Activated CD4-positive, alpha-beta T cell treated with anti-CD3 and anti-CD28 coated beads for 36 hours (primary cell): ENCODE measurements at regions of chr3 and their contacts with region 1.

Region 1: DNA sequence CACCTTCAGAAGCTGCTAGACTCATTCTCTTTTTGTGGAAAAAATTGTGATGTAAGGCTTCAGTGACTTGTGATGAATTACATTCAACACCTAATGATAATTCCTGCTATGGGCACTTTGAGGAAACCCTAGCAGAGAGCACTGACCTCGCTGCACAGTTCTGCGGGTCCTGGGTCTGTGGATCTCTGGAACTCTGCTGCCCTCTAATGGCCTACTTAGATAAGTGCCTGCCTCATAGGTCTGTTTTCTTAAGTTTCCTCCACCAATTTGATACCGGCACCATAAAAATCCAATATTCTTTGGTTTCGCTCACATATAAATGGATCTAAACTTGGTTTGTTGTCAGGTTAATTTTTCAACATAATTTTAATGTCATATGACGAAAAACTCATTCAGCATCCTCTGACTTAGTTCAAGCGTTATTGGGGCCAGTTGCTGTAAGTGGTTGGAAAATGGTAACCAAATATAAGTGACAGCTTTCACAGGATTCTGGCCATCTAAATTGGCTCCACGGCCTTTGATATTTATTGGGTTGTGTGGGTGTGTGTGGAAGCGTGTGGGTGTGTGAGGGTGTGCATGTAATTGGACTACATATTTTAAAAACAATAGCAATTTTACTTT is 10.4 kb downstream of the SLITRK3 start:
- DNase-seq: peak; percentile 55
- ATAC-seq: peak; percentile 81
- H3K4me3 Mint-ChIP-seq: no peak overlapping the region
- H3K27ac Mint-ChIP-seq: no peak overlapping the region
- H3K4me1 Mint-ChIP-seq: no peaks in the 10 kb centered on the region
- H3K27me3 Mint-ChIP-seq: peaks cover 12% of the 10 kb centered on the region

Region 2: GRCh38 chr3:163924600-163924999 is 1261.2 kb before region 1 on chr3:
- CTCF ChIA-PET with region 1: no interaction called
- POLR2A ChIA-PET with region 1: no interaction called
- intact Hi-C with region 1: loop called in 1 of 2 experiments (anchors 10 kb)
- DNase-seq: no peak
- ATAC-seq: no peak
- H3K4me3 Mint-ChIP-seq: no peak overlapping the region
- H3K27ac Mint-ChIP-seq: no peak overlapping the region
- H3K4me1 Mint-ChIP-seq: no peaks in the 10 kb centered on the region
- H3K27me3 Mint-ChIP-seq: no peaks in the 10 kb centered on the region

Region 3: GRCh38 chr3:164230385-164231094 is 955.3 kb before region 1 on chr3:
- CTCF ChIA-PET with region 1: no interaction called
- POLR2A ChIA-PET with region 1: no interaction called
- intact Hi-C with region 1: no loop called
- DNase-seq: no peak
- ATAC-seq: no peak
- H3K4me3 Mint-ChIP-seq: no peak overlapping the region
- H3K27ac Mint-ChIP-seq: no peak overlapping the region
- H3K4me1 Mint-ChIP-seq: no peaks in the 10 kb centered on the region
- H3K27me3 Mint-ChIP-seq: no peaks in the 10 kb centered on the region

Region 4: DNA sequence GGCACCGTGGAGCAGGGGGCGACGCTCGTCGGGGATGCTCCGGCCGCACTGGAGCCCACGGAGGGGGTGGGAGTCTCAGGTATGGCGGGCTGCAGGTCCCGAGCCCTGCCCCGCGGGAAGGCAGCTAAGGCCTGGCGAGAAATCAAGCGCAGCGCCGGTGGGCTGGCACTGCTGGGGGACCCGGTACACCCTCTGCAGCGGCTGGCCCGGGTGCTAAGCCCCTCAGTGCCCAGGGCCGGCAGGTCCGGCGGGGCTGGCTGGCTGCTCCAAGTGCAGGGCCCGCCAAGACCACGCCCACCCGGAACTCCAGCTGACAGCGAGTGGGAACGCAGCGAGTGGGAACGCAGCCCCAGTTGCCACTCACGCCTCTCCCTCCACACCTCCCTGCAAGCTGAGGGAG is 783.9 kb before region 1 on chr3:
- CTCF ChIA-PET with region 1: no interaction called
- POLR2A ChIA-PET with region 1: no interaction called
- intact Hi-C with region 1: loop called in 1 of 2 experiments (anchors 10 kb)
- DNase-seq: no peak
- ATAC-seq: no peak
- H3K4me3 Mint-ChIP-seq: no peak overlapping the region
- H3K27ac Mint-ChIP-seq: no peak overlapping the region
- H3K4me1 Mint-ChIP-seq: no peaks in the 10 kb centered on the region
- H3K27me3 Mint-ChIP-seq: no peaks in the 10 kb centered on the region

Region 5: DNA sequence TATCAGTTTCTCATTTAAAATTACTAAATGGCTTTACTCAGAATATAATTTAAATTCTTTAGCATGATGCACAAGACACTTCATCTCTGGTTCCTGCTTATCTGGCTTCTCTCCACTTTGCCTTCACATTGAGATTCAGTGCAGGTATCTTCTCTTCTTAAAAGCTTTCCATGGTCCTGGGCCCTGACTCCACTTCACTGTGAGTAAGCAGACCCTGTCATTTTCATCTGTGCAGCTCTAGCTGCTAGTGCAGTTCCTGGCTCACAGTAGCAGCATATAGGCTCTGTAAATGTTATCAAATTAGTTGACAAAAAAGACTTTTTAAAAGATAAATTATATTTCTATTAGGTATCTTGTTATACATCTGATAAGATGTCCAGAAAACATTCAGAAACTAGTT is 592.6 kb after region 1 on chr3:
- CTCF ChIA-PET with region 1: no interaction called
- POLR2A ChIA-PET with region 1: no interaction called
- intact Hi-C with region 1: no loop called
- DNase-seq: no peak
- ATAC-seq: no peak
- H3K4me3 Mint-ChIP-seq: no peak overlapping the region
- H3K27ac Mint-ChIP-seq: no peak overlapping the region
- H3K4me1 Mint-ChIP-seq: no peaks in the 10 kb centered on the region
- H3K27me3 Mint-ChIP-seq: no peaks in the 10 kb centered on the region